CD4-positive, alpha-beta memory T cell (primary cell): ENCODE measurements at regions of chr15 and their contacts with region 1.

Region 1: DNA sequence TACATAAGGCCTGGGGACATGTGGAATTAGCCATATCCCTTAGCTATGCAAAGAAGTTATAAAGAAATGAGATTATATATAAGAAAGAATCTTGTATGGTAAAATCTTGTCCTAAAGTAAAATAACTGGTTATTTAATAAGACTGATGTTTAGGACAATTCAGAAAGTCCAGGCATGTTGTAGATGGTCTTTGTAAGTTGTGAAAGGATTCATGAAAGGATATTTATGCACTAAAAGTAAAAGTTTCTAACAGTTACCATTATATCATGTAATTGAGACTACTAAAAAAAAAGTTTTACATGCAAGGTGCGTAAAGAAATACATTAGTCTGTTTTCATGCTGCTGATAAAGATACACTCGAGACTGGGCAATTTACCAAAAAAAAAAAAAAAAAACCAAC is 146.3 kb downstream of the FMN1 start:
- DNase-seq: no peak
- H3K4me3 ChIP-seq: no peak overlapping the region
- H3K4me3 Mint-ChIP-seq: no peak overlapping the region
- H3K27ac ChIP-seq: no peak overlapping the region
- H3K27ac Mint-ChIP-seq: peak overlapping the region in 1 of 7 donors; percentile 52
- H3K4me1 ChIP-seq: no peaks in the 10 kb centered on the region
- H3K4me1 Mint-ChIP-seq: peaks cover 0 to 4% (median 0%) of the 10 kb centered on the region in 4 donors
- H3K27me3 ChIP-seq: no peaks in the 10 kb centered on the region
- H3K27me3 Mint-ChIP-seq: no peaks in the 10 kb centered on the region

Region 2: DNA sequence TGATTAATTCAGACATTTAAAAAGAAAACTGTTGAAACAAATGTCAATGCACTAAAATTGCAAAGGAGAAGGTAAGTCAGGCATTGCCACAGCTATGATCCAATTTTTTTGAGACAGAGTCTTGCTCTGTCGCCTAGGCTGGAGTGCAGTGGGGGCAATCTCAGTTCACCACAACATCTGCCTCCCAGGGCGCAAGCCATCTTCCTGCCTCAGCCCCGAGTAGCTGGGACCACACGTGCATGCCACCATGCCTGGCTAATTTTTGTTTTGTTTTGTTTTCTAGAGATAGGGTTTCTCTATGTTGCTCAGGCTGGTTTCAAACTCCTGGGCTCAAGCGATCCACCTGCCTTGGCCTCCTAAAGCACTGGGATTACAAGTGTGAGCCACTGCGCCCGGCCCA is 28.7 kb after region 1 on chr15:
- CTCF ChIA-PET with region 1: no interaction called
- POLR2A ChIA-PET with region 1: no interaction called
- intact Hi-C with region 1: loop called (anchors 2 kb)
- DNase-seq: no peak
- H3K4me3 ChIP-seq: no peak overlapping the region
- H3K4me3 Mint-ChIP-seq: no peak overlapping the region
- H3K27ac ChIP-seq: no peak overlapping the region
- H3K27ac Mint-ChIP-seq: no peak overlapping the region
- H3K4me1 ChIP-seq: no peaks in the 10 kb centered on the region
- H3K4me1 Mint-ChIP-seq: peaks cover 0 to 38% (median 0%) of the 10 kb centered on the region in 4 donors
- H3K27me3 ChIP-seq: no peaks in the 10 kb centered on the region
- H3K27me3 Mint-ChIP-seq: peaks cover 3 to 7% of the 10 kb centered on the region in 2 donors

Region 3: DNA sequence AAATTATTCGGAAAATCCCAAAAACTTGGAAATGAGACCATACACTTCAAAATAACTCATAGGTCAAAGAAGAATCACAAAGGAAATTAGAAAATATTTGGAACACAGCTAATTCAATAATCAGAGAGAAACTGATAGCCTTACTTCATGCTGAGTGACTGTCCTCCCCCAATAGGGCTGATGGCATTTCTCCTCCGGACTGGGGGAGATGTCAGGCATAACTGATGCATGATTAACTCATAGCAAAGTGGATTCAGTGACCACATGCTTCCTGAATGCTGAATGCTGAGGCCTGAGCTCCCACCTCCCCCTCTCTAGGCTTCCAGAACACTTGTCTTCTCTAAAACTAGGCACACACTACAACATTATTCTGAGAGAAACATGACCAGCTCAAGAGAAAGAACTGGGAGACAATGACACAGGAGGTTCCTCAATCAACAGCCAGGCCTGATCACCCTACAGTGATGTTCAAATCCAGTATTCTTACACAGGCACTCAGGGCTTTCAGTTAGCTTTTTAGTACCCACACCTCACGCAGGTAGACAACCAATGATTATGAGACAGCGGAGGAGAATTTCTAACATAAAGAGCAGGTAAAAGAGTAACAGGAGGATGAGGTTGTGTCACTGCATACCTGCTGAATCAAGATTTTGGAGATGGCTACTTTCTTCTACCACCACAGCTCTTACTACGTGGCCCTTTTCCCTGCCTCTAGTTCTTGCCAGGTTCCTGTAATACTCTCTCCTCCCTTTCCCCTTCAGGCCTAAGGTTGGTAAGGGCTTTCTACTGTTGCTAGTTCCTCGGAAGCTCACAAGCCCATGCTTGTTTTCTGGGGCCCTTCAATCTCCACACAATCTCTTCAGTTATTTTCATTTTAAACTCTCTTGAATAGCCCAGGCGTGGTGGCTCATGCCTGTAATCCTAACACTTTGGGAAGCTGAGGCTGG is 50.1 kb after region 1 on chr15:
- CTCF ChIA-PET with region 1: no interaction called
- POLR2A ChIA-PET with region 1: no interaction called
- intact Hi-C with region 1: no loop called
- DNase-seq: no peak
- H3K4me3 ChIP-seq: no peak overlapping the region
- H3K4me3 Mint-ChIP-seq: no peak overlapping the region
- H3K27ac ChIP-seq: no peak overlapping the region
- H3K27ac Mint-ChIP-seq: no peak overlapping the region
- H3K4me1 ChIP-seq: peaks cover 3% of the 10 kb centered on the region
- H3K4me1 Mint-ChIP-seq: peaks cover 0 to 14% (median 0%) of the 10 kb centered on the region in 4 donors
- H3K27me3 ChIP-seq: no peaks in the 10 kb centered on the region
- H3K27me3 Mint-ChIP-seq: peaks cover 1 to 2% of the 10 kb centered on the region in 2 donors